ENCODE measurements at regions of chr17 and their contacts with region 1.

Region 1: DNA sequence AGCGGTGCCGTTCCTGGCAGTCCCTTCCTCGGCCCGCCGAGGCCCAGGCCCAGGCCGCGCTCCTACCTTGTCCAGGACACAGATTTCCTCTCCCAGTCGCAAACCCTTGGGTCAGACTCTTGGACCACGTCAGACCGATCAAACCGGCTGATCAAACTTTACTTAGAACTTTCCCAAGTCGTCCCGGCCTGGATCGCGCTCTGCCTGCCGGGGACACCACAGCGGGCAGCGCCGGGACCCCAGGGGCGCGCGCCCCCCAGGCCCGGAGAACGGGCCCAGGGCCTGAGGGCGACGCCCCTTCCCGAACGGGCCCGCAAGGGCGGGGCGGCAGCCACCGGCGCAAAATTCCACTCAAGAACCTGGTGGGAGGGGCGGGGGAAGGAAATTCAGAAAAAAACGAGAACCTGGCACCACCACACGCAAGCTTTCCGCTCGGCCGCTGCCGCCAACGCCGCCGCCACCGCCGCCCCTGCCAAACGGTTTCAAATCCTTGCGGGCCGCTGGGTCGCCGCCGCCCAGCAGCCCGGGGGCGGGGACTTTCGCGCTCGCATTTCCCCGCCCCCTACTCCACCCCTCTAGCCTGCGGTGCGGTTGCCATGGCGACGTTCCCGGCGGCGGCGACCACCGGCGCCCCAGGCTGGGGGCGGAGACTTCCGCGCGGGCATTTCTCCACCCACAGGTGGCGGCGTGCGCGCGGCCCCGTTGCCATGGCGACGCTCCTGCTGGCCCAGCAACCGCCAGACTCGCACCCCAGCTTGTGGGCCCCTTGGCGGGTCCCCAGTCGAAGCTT is at the start of gene CEP112:
- H3K4me3 Mint-ChIP-seq: peak within 1 kb of the TSS; percentile 79
- H3K27ac Mint-ChIP-seq: peak within 1 kb of the TSS; percentile 83
- H3K4me1 Mint-ChIP-seq: no peaks in the 10 kb centered on the region
- H3K27me3 Mint-ChIP-seq: no peaks in the 10 kb centered on the region

Region 2: DNA sequence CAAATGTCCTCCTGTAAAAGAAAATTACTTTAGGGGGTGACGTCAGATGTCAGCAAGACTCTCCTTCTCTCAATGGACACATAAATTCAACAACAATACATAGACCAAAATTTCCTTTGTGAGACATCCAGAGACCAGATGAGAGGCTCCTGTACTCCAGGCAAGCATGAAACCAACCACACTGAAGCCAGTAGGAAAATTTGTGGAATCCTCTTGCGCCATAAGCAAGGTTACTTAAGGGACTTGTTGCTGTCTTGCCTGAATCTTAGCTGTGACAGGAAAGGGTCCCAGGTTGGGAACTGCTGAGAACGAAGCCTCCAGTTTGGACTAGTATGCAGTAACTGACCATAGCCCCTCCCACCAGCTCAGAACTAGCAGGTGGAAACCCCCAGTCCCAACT is 55.9 kb before region 1 on chr17:
- intact Hi-C with region 1: no loop called
- H3K4me3 Mint-ChIP-seq: no peak overlapping the region
- H3K27ac Mint-ChIP-seq: no peak overlapping the region
- H3K4me1 Mint-ChIP-seq: no peaks in the 10 kb centered on the region
- H3K27me3 Mint-ChIP-seq: peaks cover 2% of the 10 kb centered on the region

Region 3: DNA sequence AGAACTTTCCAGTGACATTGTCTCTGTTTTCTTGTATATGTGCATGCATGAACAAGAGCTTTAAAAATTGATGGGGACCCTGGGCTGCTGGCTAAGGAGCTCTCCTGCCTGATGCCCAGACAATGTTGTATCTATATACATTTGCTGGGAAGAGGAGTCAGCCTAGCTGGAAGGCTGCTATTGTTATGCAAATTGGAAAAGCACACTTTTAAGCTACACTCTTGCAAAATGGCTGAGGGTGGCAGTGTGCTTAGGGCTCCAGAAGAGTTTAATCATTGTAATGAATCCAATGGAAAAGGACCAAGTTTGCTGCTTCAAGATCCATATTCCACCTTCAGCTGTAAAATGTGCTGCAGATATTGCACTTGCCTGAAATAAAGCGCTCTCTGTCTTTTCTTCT is 282.5 kb after region 1 on chr17:
- intact Hi-C with region 1: loop called (anchors 10 kb)
- H3K4me3 Mint-ChIP-seq: no peak overlapping the region
- H3K27ac Mint-ChIP-seq: no peak overlapping the region
- H3K4me1 Mint-ChIP-seq: peaks cover 45% of the 10 kb centered on the region
- H3K27me3 Mint-ChIP-seq: no peaks in the 10 kb centered on the region

Measured in dendritic cell treated with granulocyte-macrophage colony-stimulating factor and Interleukin-4, amounts not matched to agents 40 ng/mL and 50 ng/mL, for 4 days (primary cell).